Mammary epithelial cell (primary cell): ENCODE measurements at regions of chr11 and their contacts with region 1.

Region 1: GRCh38 chr11:127308291-127308690 is 307.7 kb upstream of the KIRREL3 start:
- DNase-seq: no peak
- H3K4me3 ChIP-seq: no peak overlapping the region
- H3K27ac ChIP-seq: no peak overlapping the region
- H3K4me1 ChIP-seq: no peaks in the 10 kb centered on the region
- H3K27me3 ChIP-seq: no peaks in the 10 kb centered on the region
- CTCF ChIP-seq: no peak

Region 2: GRCh38 chr11:127252321-127252720 is 56.0 kb before region 1 on chr11:
- CTCF ChIA-PET with region 1: no interaction called
- dilution Hi-C with region 1: loop called (anchors 5 kb)
- in situ Hi-C with region 1: no loop called
- intact Hi-C with region 1: no loop called
- DNase-seq: no peak
- H3K4me3 ChIP-seq: no peak overlapping the region
- H3K27ac ChIP-seq: no peak overlapping the region
- H3K4me1 ChIP-seq: no peaks in the 10 kb centered on the region
- H3K27me3 ChIP-seq: peaks cover 2% of the 10 kb centered on the region
- CTCF ChIP-seq: no peak